Activated CD8-positive, alpha-beta T cell treated with anti-CD3 and anti-CD28 coated beads for 36 hours (primary cell): ENCODE measurements at regions of chr10 and their contacts with region 1.

Region 1: GRCh38 chr10:31083765-31084184 is 52.1 kb upstream of the ZNF438 start:
- DNase-seq: peak; percentile 80
- ATAC-seq: peak; percentile 88
- H3K4me3 Mint-ChIP-seq: no peak overlapping the region
- H3K27ac Mint-ChIP-seq: peak overlapping the region; percentile 66
- H3K4me1 Mint-ChIP-seq: peaks cover 5% of the 10 kb centered on the region
- H3K27me3 Mint-ChIP-seq: no peaks in the 10 kb centered on the region
- CTCF ChIP-seq: peak; percentile 57

Region 2: GRCh38 chr10:31031558-31032257 is 52.1 kb before region 1 on chr10 and contains the start of gene ZNF438:
- CTCF ChIA-PET with region 1: interaction called, 10 read pairs
- POLR2A ChIA-PET with region 1: no interaction called
- intact Hi-C with region 1: no loop called
- DNase-seq: peak; percentile 92
- ATAC-seq: peak; percentile 90
- H3K4me3 Mint-ChIP-seq: peak within 1 kb of the TSS; percentile 80
- H3K27ac Mint-ChIP-seq: peak within 1 kb of the TSS; percentile 97
- H3K4me1 Mint-ChIP-seq: peaks cover 5% of the 10 kb centered on the region
- H3K27me3 Mint-ChIP-seq: no peaks in the 10 kb centered on the region
- CTCF ChIP-seq: peak; percentile 55
- total RNA-seq, gene ZNF438: 3.0 to 3.9 TPM

Region 3: DNA sequence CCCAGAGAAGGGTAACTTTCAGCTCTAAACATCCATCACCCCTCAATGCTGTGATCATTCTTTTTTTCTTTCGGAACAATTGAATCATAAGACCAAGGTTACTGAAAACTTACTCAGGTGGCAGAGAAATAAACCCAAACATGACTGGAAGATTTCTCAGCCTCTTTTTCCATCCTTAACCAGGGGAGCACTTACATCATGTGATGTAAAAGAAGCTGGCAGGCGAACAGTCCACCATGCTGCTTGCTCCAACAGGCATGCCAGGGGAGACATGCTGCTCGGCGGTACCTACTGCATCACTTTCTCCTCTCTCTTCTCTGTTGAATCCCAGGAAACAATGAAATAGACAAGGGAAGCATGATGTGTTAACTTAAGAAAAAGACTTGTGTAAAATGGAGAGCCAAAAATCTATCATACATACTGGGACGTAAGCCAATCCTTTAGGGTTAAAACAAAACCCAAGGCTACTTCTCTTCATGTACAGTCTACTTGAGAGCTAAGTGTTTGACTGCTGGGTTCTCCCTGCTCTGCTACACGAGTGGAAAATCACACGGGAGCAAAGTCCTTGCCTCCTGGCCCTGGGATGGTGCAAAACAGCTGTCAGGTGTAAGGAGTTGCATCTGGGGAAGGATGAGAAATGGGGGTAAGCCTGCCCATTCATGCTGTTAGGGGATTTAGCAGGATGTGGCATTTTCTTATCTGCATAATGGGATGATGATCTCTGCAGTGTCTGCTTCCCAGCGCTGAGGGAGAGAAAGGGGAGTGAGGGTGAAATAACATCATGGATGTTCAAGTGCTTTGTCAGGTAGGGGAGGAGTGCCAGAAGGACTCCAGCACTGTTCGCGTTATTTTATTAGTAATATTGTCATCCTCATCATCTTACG is 12.1 kb after region 1 on chr10:
- CTCF ChIA-PET with region 1: interaction called, 18 read pairs
- POLR2A ChIA-PET with region 1: no interaction called
- intact Hi-C with region 1: no loop called
- DNase-seq: no peak
- ATAC-seq: no peak
- H3K4me3 Mint-ChIP-seq: no peak overlapping the region
- H3K27ac Mint-ChIP-seq: peak overlapping the region; percentile 41
- H3K4me1 Mint-ChIP-seq: peaks cover 31% of the 10 kb centered on the region
- H3K27me3 Mint-ChIP-seq: peaks cover 2% of the 10 kb centered on the region
- CTCF ChIP-seq: no peak

Region 4: GRCh38 chr10:31101123-31101522 is 17.3 kb after region 1 on chr10:
- CTCF ChIA-PET with region 1: interaction called, 18 read pairs
- POLR2A ChIA-PET with region 1: no interaction called
- intact Hi-C with region 1: no loop called
- DNase-seq: peak; percentile 87
- ATAC-seq: peak; percentile 99
- H3K4me3 Mint-ChIP-seq: peak overlapping the region; percentile 27
- H3K27ac Mint-ChIP-seq: peak overlapping the region; percentile 85
- H3K4me1 Mint-ChIP-seq: peaks cover 29% of the 10 kb centered on the region
- H3K27me3 Mint-ChIP-seq: peaks cover 2% of the 10 kb centered on the region
- CTCF ChIP-seq: no peak

Region 5: DNA sequence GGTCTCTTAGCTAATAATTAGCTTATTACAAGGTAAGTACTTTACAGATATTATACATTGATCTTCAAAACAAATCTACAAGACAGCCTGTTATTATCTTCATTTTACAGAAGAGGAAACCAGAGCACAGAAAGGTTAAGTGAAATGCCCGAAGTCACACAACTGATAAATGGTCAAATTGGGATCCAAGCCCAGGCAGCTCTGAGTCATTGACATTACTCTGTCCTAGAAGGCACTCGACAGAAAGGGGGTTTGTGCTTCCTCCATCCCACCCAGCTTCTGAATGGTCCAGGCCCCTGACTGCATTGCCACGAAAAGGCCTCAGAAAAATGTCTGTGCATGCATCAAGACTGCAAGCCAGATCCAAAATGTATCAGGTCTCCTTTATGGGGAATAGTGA is 29.2 kb after region 1 on chr10:
- CTCF ChIA-PET with region 1: no interaction called
- POLR2A ChIA-PET with region 1: no interaction called
- intact Hi-C with region 1: no loop called
- DNase-seq: no peak
- ATAC-seq: no peak
- H3K4me3 Mint-ChIP-seq: no peak overlapping the region
- H3K27ac Mint-ChIP-seq: no peak overlapping the region
- H3K4me1 Mint-ChIP-seq: no peaks in the 10 kb centered on the region
- H3K27me3 Mint-ChIP-seq: no peaks in the 10 kb centered on the region
- CTCF ChIP-seq: no peak

Region 6: GRCh38 chr10:31399631-31400030 is 315.9 kb after region 1 on chr10:
- CTCF ChIA-PET with region 1: no interaction called
- POLR2A ChIA-PET with region 1: no interaction called
- intact Hi-C with region 1: no loop called
- DNase-seq: no peak
- ATAC-seq: no peak
- H3K4me3 Mint-ChIP-seq: no peak overlapping the region
- H3K27ac Mint-ChIP-seq: no peak overlapping the region
- H3K4me1 Mint-ChIP-seq: peaks cover 50% of the 10 kb centered on the region
- H3K27me3 Mint-ChIP-seq: no peaks in the 10 kb centered on the region
- CTCF ChIP-seq: no peak